A549 (cell line): ENCODE measurements at regions of chr1 and their contacts with region 1.

Region 1: GRCh38 chr1:156892190-156893047 is 1.1 kb upstream of the PEAR1 start:
- DNase-seq: peak; percentile 89
- ATAC-seq: peak; percentile 65 to 86
- H3K4me3 ChIP-seq: peak overlapping the region; percentile 19; the same call in 2 of the 3 replicates
- H3K27ac ChIP-seq: peak overlapping the region; percentile 61 to 93; a peak in 5 of 6 replicates
- H3K4me1 ChIP-seq: peaks cover 40% of the 10 kb centered on the region
- CTCF ChIP-seq: peak; percentile 93
- EP300 ChIP-seq: no peak
- POLR2A ChIP-seq: no peak
- RAD21 ChIP-seq: peak; percentile 69 to 83

Region 2: DNA sequence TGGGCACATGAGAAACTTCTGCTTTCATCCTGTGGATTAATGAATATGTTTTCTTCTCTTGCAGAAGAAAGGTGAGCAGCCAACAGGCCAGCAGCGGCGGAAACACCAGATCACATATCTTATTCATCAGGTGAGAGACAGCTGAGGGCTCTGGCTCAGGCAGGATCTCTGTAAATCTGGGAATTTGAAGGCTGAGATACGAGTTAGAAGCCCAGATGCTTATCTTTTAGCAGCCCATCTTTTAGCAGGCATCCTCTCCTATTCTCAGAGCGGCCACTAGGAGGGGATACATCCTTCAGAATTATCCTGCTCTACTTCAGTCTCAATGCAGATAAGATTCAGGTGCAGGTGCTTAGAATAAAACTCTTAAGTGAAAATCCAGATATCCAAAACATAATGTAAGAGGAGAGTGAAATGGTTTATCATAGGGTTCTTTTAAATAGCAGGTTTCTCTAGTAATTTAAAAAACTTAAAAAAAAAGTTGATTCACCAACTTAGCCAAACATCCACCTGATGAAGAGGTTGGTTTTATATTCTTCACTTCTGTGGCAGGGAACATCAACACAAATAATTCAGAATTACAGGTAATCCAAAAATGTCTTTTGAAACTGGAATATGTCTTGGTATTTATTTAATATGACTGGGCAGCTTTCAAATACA is 95.1 kb before region 1 on chr1:
- CTCF ChIA-PET with region 1: interaction called, 125 read pairs
- POLR2A ChIA-PET with region 1: no interaction called
- DNase-seq: peak; percentile 68 to 75
- ATAC-seq: peak; percentile 89 to 91
- H3K4me3 ChIP-seq: no peak overlapping the region
- H3K27ac ChIP-seq: no peak overlapping the region
- H3K4me1 ChIP-seq: no peaks in the 10 kb centered on the region
- CTCF ChIP-seq: peak; percentile 87
- EP300 ChIP-seq: no peak
- POLR2A ChIP-seq: no peak
- RAD21 ChIP-seq: peak; percentile 72 to 78

Region 3: DNA sequence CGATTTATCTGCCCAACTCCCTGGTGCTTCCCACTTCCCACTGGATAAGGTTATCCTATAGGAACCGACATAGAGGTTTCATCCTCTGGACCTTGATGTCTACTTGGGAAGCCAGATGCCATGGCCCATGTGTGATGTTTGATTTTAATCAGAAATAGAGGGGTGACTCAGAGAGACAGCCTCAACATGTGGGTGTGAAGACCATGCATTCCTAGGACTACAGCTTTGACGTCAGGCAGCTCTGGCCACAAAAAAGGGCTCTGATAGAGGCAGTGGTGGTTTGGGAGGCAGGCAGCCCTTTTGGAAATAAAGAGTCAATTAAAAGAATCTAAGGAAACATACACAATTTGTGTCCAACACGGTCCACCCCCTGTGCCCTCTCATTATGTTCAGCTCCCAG is 70.6 kb before region 1 on chr1:
- CTCF ChIA-PET with region 1: interaction called, 22 read pairs
- POLR2A ChIA-PET with region 1: no interaction called
- DNase-seq: no peak
- ATAC-seq: no peak
- H3K4me3 ChIP-seq: no peak overlapping the region
- H3K27ac ChIP-seq: no peak overlapping the region
- H3K4me1 ChIP-seq: no peaks in the 10 kb centered on the region
- CTCF ChIP-seq: no peak
- EP300 ChIP-seq: no peak
- POLR2A ChIP-seq: no peak
- RAD21 ChIP-seq: no peak

Region 4: DNA sequence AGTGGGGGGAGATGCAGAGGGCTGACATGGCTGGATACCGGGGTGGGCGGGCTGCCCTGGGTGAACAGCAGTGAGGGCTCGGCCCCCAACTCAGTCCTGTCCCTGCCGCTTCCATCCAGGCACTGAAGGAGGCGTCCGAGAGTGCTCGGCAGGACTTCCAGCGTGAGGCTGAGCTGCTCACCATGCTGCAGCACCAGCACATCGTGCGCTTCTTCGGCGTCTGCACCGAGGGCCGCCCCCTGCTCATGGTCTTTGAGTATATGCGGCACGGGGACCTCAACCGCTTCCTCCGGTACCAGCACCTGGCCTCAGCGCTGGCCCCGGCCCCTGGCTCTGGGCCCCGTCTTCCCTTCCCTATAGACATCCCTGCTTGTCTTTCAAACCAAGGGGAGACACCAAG is 16.1 kb before region 1 on chr1:
- CTCF ChIA-PET with region 1: interaction called, 86 read pairs
- POLR2A ChIA-PET with region 1: no interaction called
- DNase-seq: no peak
- ATAC-seq: peak in 1 of 2 experiments; percentile 52; a peak in 3 of 6 replicates
- H3K4me3 ChIP-seq: no peak overlapping the region
- H3K27ac ChIP-seq: no peak overlapping the region
- H3K4me1 ChIP-seq: peaks cover under 1% of the 10 kb centered on the region; the same call in 1 of the 3 replicates
- CTCF ChIP-seq: no peak
- EP300 ChIP-seq: no peak
- POLR2A ChIP-seq: no peak
- RAD21 ChIP-seq: no peak

Region 5: DNA sequence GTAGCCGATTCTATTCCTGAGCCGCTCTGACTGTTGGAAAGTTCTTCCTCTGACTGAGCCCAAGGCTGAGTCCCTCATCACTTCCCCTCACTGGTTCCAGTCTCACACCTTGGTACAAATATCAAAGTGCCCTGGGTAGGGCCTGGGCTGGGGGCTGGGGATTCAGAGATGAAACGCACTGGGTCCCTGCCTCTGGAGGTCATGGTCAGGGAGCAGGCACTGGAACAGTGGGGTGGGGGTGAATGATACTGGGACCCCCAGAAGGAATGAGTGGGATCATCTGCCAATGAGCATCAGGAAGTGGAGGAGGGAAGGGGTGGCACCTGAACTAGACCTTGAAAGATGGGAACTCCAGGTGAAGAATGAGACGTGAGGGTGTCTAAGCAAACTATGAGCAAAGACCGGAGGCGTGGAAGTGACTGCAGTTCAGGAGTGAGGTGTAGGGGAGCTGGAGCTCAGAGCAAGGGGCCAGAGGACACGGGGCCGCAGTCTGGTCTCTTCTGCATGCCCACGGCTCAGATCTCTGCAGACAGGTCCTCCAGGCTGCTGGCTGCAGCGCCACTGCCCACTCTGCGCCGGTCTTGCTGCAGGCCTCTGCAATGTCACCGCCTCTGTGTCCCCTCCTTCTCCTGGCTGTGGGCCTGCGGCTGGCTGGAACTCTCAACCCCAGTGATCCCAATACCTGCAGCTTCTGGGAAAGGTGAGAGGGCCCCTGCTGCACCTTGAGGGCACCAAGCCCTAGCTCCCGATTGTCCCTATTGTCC is 11.1 kb after region 1 on chr1:
- CTCF ChIA-PET with region 1: no interaction called
- POLR2A ChIA-PET with region 1: no interaction called
- DNase-seq: no peak
- ATAC-seq: no peak
- H3K4me3 ChIP-seq: no peak overlapping the region
- H3K27ac ChIP-seq: 0 out of 6 replicates have a peak overlapping the region, but pooled peaks of 1 of the 2 experiments have one; percentile 17
- H3K4me1 ChIP-seq: peaks cover 35% of the 10 kb centered on the region
- CTCF ChIP-seq: no peak
- EP300 ChIP-seq: no peak
- POLR2A ChIP-seq: no peak
- RAD21 ChIP-seq: no peak

Region 6: DNA sequence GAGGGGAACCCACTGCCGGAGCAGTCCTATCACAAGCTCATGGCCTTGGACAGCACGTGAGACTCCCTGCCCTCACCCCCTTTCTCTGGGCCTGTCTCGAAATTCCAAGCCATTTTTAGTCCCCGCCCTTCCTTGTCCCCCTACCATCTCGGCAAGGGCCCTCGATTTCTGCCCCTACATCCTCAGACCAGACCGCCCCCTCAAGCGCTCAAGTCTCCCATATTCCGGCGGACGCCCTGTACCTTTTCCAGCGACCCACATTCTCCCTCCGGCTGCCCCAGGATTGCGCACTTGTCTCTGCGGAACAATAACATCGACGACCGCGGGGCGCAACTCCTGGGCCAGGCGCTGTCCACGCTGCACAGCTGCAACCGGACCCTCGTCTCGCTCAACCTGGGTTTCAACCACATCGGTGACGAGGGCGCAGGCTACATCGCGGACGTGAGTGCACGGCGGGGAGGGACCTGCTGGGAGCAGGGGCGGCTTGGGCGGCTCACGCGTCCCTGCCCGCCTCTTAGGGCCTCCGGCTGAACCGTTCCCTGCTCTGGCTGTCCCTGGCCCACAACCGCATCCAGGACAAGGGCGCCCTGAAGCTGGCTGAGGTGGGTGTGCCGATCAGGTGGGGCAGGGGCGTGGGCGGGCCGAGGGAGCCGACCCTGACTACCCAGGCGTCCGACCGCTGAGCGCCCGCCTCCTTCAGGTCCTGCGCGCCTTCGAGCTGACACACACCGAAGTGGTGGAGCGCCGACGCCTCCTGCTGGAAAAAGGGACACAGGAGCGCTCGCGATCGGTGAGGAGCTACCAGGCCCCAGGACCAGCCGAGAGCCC is 35.0 kb after region 1 on chr1:
- CTCF ChIA-PET with region 1: interaction called, 341 read pairs
- POLR2A ChIA-PET with region 1: interaction called, 3 read pairs
- DNase-seq: peak; percentile 84 to 87
- ATAC-seq: peak; percentile 85 to 94
- H3K4me3 ChIP-seq: peak overlapping the region; percentile 46
- H3K27ac ChIP-seq: peak overlapping the region; percentile 61 to 82; a peak in 5 of 6 replicates
- H3K4me1 ChIP-seq: peaks cover 7% of the 10 kb centered on the region; the same call in 1 of the 3 replicates
- CTCF ChIP-seq: peak; percentile 82
- EP300 ChIP-seq: no peak
- POLR2A ChIP-seq: no peak
- RAD21 ChIP-seq: peak; percentile 90 to 92